ENCODE measurements at regions of chr6 and their contacts with region 1.

Region 1: GRCh38 chr6:21208081-21208795 is 385.3 kb upstream of the SOX4 start:
- DNase-seq: no peak
- H3K4me3 ChIP-seq: no peak overlapping the region
- H3K4me3 Mint-ChIP-seq: no peak overlapping the region
- H3K27ac Mint-ChIP-seq: no peak overlapping the region
- H3K4me1 ChIP-seq: 0 out of 2 replicates have a peak, but pooled peaks cover 4% of the 10 kb centered on the region
- H3K4me1 Mint-ChIP-seq: peaks cover 6% of the 10 kb centered on the region
- H3K27me3 ChIP-seq: no peaks in the 10 kb centered on the region
- H3K27me3 Mint-ChIP-seq: no peaks in the 10 kb centered on the region
- CTCF ChIP-seq: no peak

Region 2: GRCh38 chr6:20946022-20946421 is 262.2 kb before region 1 on chr6:
- CTCF ChIA-PET with region 1: interaction called, 10 read pairs
- POLR2A ChIA-PET with region 1: no interaction called
- intact Hi-C with region 1: no loop called
- DNase-seq: no peak
- H3K4me3 ChIP-seq: no peak overlapping the region
- H3K4me3 Mint-ChIP-seq: no peak overlapping the region
- H3K27ac Mint-ChIP-seq: no peak overlapping the region
- H3K4me1 ChIP-seq: no peaks in the 10 kb centered on the region
- H3K4me1 Mint-ChIP-seq: no peaks in the 10 kb centered on the region
- H3K27me3 ChIP-seq: no peaks in the 10 kb centered on the region
- H3K27me3 Mint-ChIP-seq: no peaks in the 10 kb centered on the region
- CTCF ChIP-seq: no peak

Region 3: GRCh38 chr6:21227486-21227885 is 19.2 kb after region 1 on chr6:
- CTCF ChIA-PET with region 1: no interaction called
- POLR2A ChIA-PET with region 1: no interaction called
- intact Hi-C with region 1: no loop called
- DNase-seq: no peak
- H3K4me3 ChIP-seq: no peak overlapping the region
- H3K4me3 Mint-ChIP-seq: no peak overlapping the region
- H3K27ac Mint-ChIP-seq: no peak overlapping the region
- H3K4me1 ChIP-seq: no peaks in the 10 kb centered on the region
- H3K4me1 Mint-ChIP-seq: peaks cover 4% of the 10 kb centered on the region
- H3K27me3 ChIP-seq: no peaks in the 10 kb centered on the region
- H3K27me3 Mint-ChIP-seq: no peaks in the 10 kb centered on the region
- CTCF ChIP-seq: no peak